WTC11 (cell line): ENCODE measurements at regions of chr17 and their contacts with region 1.

Region 1: GRCh38 chr17:4004517-4005295 is 40.5 kb upstream of the ATP2A3 start:
- DNase-seq: peak; percentile 78
- ATAC-seq: peak; percentile 67
- H3K4me3 Mint-ChIP-seq: peak overlapping the region; percentile 34
- H3K27ac Mint-ChIP-seq: no peak overlapping the region; the same call in 1 of the 2 replicates
- H3K4me1 Mint-ChIP-seq: peaks cover 22% of the 10 kb centered on the region
- H3K27me3 Mint-ChIP-seq: no peaks in the 10 kb centered on the region
- CTCF ChIP-seq: peak; percentile 96

Region 2: DNA sequence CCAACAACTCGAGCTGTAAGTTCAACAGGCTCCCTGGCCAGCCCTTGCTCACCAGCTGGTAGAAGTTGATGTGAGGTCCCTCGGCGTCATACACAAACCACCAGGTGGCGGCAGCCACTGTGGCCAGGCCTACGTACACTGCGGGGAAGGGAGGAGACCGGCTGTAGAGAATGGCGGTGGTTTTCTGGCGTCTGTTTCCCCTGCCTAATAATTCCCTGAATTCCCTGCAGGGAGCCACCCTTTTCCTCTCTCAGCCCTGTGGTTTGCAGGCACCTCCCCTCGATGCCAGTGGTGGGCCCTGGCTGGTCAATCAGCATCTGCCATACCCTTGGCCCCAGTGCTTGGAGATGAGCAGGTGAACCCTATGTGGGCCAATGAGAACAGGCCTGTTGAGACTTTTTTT is 69.6 kb before region 1 on chr17:
- CTCF ChIA-PET with region 1: interaction called, 85 read pairs
- POLR2A ChIA-PET with region 1: no interaction called
- DNase-seq: peak; percentile 83
- ATAC-seq: peak; percentile 97
- H3K4me3 Mint-ChIP-seq: no peak overlapping the region
- H3K27ac Mint-ChIP-seq: no peak overlapping the region; the same call in 1 of the 2 replicates
- H3K4me1 Mint-ChIP-seq: no peaks in the 10 kb centered on the region
- H3K27me3 Mint-ChIP-seq: no peaks in the 10 kb centered on the region
- CTCF ChIP-seq: peak; percentile 46; the same call in 1 of the 2 replicates

Region 3: DNA sequence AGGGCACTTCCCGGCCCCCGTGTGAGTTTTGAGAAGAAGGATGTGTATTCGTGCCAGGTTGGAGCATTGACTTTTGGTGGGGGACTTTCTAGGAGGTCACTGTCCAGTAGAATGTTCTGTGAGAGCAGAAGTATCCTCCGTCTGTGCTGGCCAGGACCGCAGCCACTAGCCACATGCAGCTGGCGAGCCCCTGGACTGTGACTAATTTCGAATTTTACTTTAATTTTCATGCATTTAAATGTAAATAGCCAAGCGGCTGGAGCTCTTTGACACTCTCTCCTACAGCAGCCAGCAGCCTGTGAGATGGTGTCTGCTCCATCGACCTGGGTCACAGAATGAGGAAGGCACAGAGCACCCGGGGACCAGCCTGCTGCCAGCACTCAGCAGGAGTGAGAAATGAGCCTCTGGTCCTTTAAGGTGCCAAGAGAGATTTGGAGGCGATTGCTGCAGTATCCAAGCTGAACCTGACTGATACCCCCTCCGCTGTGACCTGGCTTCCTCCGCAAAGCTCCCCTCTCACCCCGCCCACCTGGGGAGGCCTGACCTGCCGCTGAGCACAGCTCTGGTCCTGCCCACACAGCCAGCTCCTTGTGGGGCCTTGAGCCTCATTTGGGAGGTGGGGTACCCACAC is 48.3 kb before region 1 on chr17:
- CTCF ChIA-PET with region 1: interaction called, 13 read pairs
- POLR2A ChIA-PET with region 1: no interaction called
- DNase-seq: no peak
- ATAC-seq: peak; percentile 63
- H3K4me3 Mint-ChIP-seq: peak overlapping the region; percentile 29
- H3K27ac Mint-ChIP-seq: peak overlapping the region; percentile 84
- H3K4me1 Mint-ChIP-seq: peaks cover 56% of the 10 kb centered on the region
- H3K27me3 Mint-ChIP-seq: no peaks in the 10 kb centered on the region
- CTCF ChIP-seq: no peak

Region 4: DNA sequence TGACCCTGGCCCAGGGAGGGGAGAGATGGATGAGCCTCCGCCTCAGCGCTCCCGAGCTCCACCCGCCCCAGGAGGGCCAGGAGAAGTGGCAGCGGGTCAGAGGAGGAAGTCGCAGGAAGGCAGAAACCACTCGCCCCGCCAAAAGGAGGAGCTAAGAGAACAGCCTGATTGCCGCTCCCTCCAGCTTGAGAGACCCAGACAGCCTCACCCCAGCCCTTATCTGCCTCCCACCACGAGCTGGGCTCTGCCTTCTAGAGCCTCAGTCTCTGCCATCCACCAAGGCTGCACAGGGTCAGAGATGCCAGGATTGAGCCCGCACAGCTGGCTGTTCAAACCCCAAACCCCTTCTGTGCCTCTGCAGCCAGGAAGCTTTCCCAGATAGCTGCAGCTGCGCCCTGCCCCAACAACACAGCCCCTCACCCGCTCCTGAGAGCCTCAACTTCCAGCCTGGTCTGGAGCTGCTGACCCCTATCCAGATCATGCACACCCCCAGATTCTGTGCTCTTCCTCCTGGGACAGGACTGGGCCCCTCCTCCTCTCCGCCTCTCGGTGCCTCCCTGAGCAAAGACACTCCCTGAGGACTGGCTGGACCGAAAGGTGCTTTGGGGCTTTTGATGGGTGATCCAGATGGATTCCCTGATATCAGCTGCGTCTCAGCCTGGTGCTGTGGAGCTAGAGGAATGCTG is 39.4 kb before region 1 on chr17:
- CTCF ChIA-PET with region 1: interaction called, 39 read pairs
- POLR2A ChIA-PET with region 1: interaction called, 4 read pairs
- DNase-seq: peak; percentile 78
- ATAC-seq: peak; percentile 85
- H3K4me3 Mint-ChIP-seq: peak overlapping the region; percentile 79
- H3K27ac Mint-ChIP-seq: peak overlapping the region; percentile 92; the same call in 1 of the 2 replicates
- H3K4me1 Mint-ChIP-seq: peaks cover 32% of the 10 kb centered on the region
- H3K27me3 Mint-ChIP-seq: peaks cover 12% of the 10 kb centered on the region
- CTCF ChIP-seq: no peak

Region 5: DNA sequence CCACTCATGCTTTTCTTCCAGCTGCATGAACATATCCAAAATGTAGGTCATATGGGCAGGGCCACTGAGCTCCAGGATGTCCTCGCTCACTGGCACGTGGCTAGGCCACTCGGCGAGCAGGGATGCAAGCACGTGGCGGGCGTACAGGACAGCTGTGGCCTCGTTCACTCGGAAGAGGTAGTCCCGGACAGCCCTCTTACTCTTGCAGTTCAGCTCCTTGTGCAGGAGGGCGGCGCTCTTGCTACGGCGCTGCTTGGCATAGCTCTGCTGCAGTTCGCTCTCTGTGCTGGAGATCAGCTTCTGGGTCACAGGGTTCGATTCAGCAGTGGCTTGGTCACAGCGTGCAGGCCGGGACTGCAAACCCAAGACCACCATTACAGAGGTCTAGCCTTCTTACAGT is 12.7 kb after region 1 on chr17:
- CTCF ChIA-PET with region 1: interaction called, 27 read pairs
- POLR2A ChIA-PET with region 1: no interaction called
- DNase-seq: peak; percentile 52
- ATAC-seq: peak; percentile 72
- H3K4me3 Mint-ChIP-seq: no peak overlapping the region
- H3K27ac Mint-ChIP-seq: no peak overlapping the region
- H3K4me1 Mint-ChIP-seq: no peaks in the 10 kb centered on the region
- H3K27me3 Mint-ChIP-seq: no peaks in the 10 kb centered on the region
- CTCF ChIP-seq: no peak

Region 6: GRCh38 chr17:4110152-4110551 is 105.4 kb after region 1 on chr17:
- CTCF ChIA-PET with region 1: no interaction called
- POLR2A ChIA-PET with region 1: no interaction called
- DNase-seq: no peak
- ATAC-seq: no peak
- H3K4me3 Mint-ChIP-seq: no peak overlapping the region
- H3K27ac Mint-ChIP-seq: no peak overlapping the region
- H3K4me1 Mint-ChIP-seq: no peaks in the 10 kb centered on the region
- H3K27me3 Mint-ChIP-seq: no peaks in the 10 kb centered on the region
- CTCF ChIP-seq: no peak